A549 (cell line): ENCODE measurements at regions of chr11 and their contacts with region 1.

Region 1: GRCh38 chr11:17063171-17064002 is 14.1 kb downstream of the RPS13 start:
- DNase-seq: peak; percentile 54 to 57
- ATAC-seq: peak; percentile 99
- H3K4me3 ChIP-seq: no peak overlapping the region
- H3K27ac ChIP-seq: no peak overlapping the region
- H3K4me1 ChIP-seq: no peaks in the 10 kb centered on the region
- CTCF ChIP-seq: peak; percentile 89
- EP300 ChIP-seq: no peak
- POLR2A ChIP-seq: no peak
- RAD21 ChIP-seq: peak; percentile 95 to 96

Region 2: GRCh38 chr11:16815043-16815767 is 248.2 kb before region 1 on chr11:
- CTCF ChIA-PET with region 1: interaction called, 31 read pairs
- POLR2A ChIA-PET with region 1: no interaction called
- DNase-seq: no peak
- ATAC-seq: no peak
- H3K4me3 ChIP-seq: no peak overlapping the region
- H3K27ac ChIP-seq: no peak overlapping the region
- H3K4me1 ChIP-seq: peaks cover 17% of the 10 kb centered on the region
- CTCF ChIP-seq: no peak
- EP300 ChIP-seq: no peak
- POLR2A ChIP-seq: no peak
- RAD21 ChIP-seq: no peak

Region 3: GRCh38 chr11:16935518-16936302 is 127.7 kb before region 1 on chr11:
- CTCF ChIA-PET with region 1: interaction called, 72 read pairs
- POLR2A ChIA-PET with region 1: no interaction called
- DNase-seq: peak; percentile 55 to 59
- ATAC-seq: peak; percentile 74 to 88
- H3K4me3 ChIP-seq: no peak overlapping the region
- H3K27ac ChIP-seq: no peak overlapping the region
- H3K4me1 ChIP-seq: no peaks in the 10 kb centered on the region
- CTCF ChIP-seq: peak; percentile 64
- EP300 ChIP-seq: no peak
- POLR2A ChIP-seq: no peak
- RAD21 ChIP-seq: peak; percentile 61 to 78

Region 4: GRCh38 chr11:16989554-16989953 is 73.8 kb before region 1 on chr11:
- CTCF ChIA-PET with region 1: interaction called, 18 read pairs
- POLR2A ChIA-PET with region 1: no interaction called
- DNase-seq: no peak
- ATAC-seq: no peak
- H3K4me3 ChIP-seq: no peak overlapping the region
- H3K27ac ChIP-seq: no peak overlapping the region
- H3K4me1 ChIP-seq: peaks cover 19% of the 10 kb centered on the region
- CTCF ChIP-seq: no peak
- EP300 ChIP-seq: no peak
- POLR2A ChIP-seq: no peak
- RAD21 ChIP-seq: no peak

Region 5: GRCh38 chr11:17014838-17015626 is 48.4 kb before region 1 on chr11:
- CTCF ChIA-PET with region 1: interaction called, 22 read pairs
- POLR2A ChIA-PET with region 1: interaction called, 3 read pairs
- DNase-seq: peak; percentile 86 to 89
- ATAC-seq: peak; percentile 60 to 66
- H3K4me3 ChIP-seq: peak overlapping the region; percentile 69
- H3K27ac ChIP-seq: peak overlapping the region; percentile 95
- H3K4me1 ChIP-seq: peaks cover 52% of the 10 kb centered on the region
- CTCF ChIP-seq: peak; percentile 66
- EP300 ChIP-seq: no peak
- POLR2A ChIP-seq: no peak
- RAD21 ChIP-seq: peak; percentile 38 to 40; a peak in 2 of 5 replicates

Region 6: GRCh38 chr11:17077520-17078401 is 14.4 kb after region 1 on chr11 and contains the start of gene RPS13:
- CTCF ChIA-PET with region 1: interaction called, 23 read pairs
- POLR2A ChIA-PET with region 1: interaction called, 5 read pairs
- DNase-seq: peak; percentile 98 to 99
- ATAC-seq: peak; percentile 94 to 96
- H3K4me3 ChIP-seq: peak within 1 kb of the TSS; percentile 95
- H3K27ac ChIP-seq: peak within 1 kb of the TSS; percentile 96 to 99
- H3K4me1 ChIP-seq: peaks cover 26% of the 10 kb centered on the region
- CTCF ChIP-seq: no peak
- EP300 ChIP-seq: no peak
- POLR2A ChIP-seq: peak; percentile 94
- RAD21 ChIP-seq: no peak
- polyA plus RNA-seq, gene RPS13: 943 and 1,343 TPM in 2 replicates